Posterior cingulate gyrus (tissue), 11 donors: ENCODE measurements at regions of chr2 and their contacts with region 1.

Region 1: DNA sequence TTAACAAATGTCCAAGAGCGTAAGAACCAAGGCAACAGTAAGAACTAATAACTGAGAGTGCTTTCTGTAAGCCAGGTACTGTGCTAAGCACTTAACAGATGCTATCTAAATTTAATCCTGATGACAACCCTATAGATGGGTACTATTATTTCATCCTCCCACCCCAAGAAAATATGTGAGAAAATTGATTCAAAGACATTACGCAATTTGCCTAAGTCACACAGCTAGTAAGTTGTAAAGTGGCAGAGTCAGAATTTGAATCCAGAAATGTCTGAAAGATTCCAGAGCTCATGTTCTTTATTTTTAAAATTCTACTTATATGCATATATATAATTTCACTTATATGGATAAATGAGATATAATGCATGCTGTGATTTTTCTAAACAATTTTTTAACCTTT is 10.1 kb downstream of the LDAH start:
- DNase-seq: no peak

Region 2: DNA sequence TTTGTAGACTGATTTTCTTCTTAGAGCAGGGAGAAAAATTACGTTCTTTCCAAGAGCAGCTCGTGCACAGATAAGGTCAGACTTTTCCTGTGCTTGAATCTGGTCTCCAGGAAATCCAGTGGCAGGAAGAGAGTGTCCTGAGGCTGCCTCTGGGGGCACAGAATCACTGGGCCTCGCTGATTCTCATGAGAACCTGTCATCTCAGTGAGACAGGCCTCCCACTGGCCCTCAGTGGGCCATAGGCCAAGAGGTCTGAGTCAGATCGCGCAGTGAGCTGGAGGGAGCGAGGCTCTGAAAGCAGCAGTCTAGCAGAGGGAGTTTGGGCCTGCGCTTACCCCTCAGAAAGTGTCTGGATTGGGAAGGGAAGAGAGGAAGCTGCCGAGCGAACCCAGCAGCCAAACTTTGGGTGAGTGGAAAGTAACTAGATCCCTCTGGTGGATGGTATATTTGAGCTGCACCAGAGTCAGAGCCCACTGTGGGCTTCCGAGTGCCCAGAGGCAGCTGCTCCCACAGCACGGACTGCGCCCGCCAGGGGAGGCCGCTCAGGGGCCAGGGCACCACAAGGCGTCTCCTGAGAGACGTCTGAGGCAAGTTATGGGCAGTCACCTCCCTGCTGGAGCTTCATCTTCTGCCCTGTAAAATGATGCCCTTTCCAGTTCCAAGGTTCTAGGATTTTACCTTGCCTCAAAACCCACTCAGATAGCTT is 137.7 kb before region 1 on chr2:
- intact Hi-C with region 1: loop called (anchors 5 kb)
- DNase-seq: peak in 1 of 10 donors; percentile 65

Region 3: GRCh38 chr2:21052044-21052443 is 239.3 kb after region 1 on chr2:
- intact Hi-C with region 1: no loop called
- DNase-seq: no peak